ENCODE measurements at regions of chr3 and their contacts with region 1.

Region 1: DNA sequence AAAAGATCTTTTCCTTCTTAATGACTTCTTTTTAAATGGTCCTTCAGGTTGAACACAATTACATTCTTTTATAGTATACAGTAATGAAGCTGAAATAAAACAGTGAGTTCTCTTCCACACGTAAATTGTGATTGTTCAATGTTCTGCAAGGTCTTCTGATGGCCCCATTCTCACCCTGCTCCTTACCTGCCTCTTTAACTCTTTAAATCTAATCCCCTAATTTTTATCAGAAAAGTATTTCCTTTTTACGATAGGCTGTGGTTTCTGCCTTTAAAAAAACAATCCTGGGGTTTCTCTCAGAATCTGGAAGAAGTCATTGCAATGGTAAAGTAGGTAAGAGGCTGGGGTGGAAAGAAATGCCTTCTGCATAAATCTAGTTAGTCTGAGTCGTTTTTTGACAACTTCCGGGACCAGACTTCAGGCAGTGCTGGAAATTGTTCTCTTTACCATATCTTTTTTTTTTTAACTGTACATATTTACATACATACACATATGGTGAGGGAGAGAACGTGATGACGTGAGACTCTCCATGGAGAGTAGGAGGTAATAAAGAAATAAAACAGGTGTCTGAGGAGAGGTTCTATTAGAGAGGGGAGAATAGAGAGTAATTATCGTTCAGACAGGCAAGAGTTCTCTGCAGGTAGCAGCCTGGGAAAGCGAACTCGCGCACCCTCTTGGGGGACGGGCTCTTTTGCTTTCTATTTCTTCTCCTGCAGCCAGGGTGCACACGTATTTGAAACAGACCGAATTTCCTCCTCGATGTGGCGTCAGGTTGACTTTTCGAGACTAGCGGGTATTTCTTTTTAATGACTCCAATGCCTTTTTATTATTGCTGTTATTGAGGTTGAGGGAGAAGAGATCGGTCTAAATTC is at the start of gene SIDT1:
- DNase-seq: peak; percentile 68
- ATAC-seq: peak; percentile 76
- H3K4me3 Mint-ChIP-seq: peak within 1 kb of the TSS; percentile 88
- H3K27ac Mint-ChIP-seq: peak within 1 kb of the TSS; percentile 97
- H3K4me1 Mint-ChIP-seq: peaks cover 40% of the 10 kb centered on the region
- H3K27me3 Mint-ChIP-seq: peaks cover 3% of the 10 kb centered on the region
- total RNA-seq, gene SIDT1: 48.3 to 50.6 TPM

Region 2: GRCh38 chr3:113514265-113514769 is 17.7 kb before region 1 on chr3:
- POLR2A ChIA-PET with region 1: interaction called, 35 read pairs
- DNase-seq: no peak
- ATAC-seq: no peak
- H3K4me3 Mint-ChIP-seq: no peak overlapping the region
- H3K27ac Mint-ChIP-seq: no peak overlapping the region
- H3K4me1 Mint-ChIP-seq: peaks cover 9% of the 10 kb centered on the region
- H3K27me3 Mint-ChIP-seq: peaks cover 17% of the 10 kb centered on the region